ENCODE measurements at regions of chr5 and their contacts with region 1.

Region 1: DNA sequence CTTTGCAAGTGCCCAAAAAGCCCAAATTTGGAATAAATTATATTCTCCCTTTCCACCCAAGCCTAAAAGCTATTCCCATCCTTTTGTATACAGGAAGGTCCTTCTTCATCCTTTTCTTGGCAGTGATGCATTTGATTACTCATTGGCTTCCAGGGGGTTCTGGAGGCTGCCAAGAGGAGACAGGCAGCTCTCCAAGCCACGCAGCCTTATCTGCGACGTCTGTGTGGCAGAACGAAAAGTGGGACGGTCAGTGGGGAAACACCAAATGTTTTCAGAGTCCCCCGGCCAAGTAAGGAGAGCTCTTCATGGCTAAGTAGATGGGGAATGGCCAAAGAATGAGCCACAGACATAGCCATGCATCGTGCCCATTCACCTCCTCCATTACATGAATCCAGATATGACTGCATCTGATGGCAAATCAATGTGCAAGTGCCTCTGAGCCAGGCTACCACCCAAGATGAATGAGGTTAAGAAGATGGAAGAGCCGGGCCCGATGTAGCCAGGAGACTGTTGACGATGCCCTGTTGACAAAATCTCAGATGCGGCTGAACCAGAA is 12.1 kb downstream of the ADAM19 start:
- DNase-seq: no peak
- ATAC-seq: no peak
- H3K4me3 ChIP-seq: no peak overlapping the region
- H3K4me3 Mint-ChIP-seq: peak overlapping the region in 1 of 10 donors; percentile 57
- H3K27ac ChIP-seq: no peak overlapping the region
- H3K27ac Mint-ChIP-seq: peak overlapping the region in 1 of 9 donors; percentile 82
- H3K4me1 ChIP-seq: peaks cover 0 to 8% of the 10 kb centered on the region in 2 donors
- H3K4me1 Mint-ChIP-seq: peaks cover 0 to 82% (median 4%) of the 10 kb centered on the region in 7 donors
- H3K27me3 ChIP-seq: no peaks in the 10 kb centered on the region
- H3K27me3 Mint-ChIP-seq: no peaks in the 10 kb centered on the region

Region 2: DNA sequence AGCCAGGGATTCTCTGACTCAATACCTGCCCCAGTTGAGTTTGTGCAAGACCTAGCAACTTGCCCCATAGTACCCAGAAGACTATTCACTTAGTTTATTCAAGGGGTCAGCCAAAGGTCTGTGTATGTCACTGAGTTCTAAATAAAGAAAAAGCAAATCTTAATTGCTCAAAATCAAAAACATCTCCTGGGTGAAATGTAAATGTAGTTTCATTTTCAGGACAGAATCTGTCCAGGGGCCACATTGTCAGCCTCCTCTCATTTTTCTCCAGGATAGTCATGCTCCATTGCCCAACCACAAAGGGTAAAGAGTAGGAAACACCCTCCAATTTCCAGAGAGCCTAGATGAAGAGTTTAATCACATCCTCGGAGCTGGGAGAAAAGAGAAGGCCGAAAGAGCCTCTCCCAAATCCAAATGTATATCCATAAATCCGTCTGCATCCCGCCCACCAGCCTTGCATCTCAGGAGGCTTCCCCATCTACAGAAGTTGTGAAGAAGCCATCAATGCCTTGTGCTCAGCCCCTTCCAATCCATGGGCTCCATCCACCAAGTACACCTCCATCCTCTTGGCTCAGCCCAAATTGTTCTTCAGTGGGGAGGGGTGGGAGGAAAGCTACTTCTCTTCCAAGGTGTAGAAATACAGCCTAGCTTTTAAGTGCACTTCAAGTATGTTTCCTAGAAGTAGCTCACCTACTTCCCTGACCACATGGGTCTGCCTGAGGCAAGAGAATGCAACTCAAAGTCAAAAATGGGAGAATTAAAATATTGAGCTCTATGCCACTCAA is 14.7 kb before region 1 on chr5:
- CTCF ChIA-PET with region 1: no interaction called
- POLR2A ChIA-PET with region 1: no interaction called
- intact Hi-C with region 1: loop called in 1 of 2 experiments (anchors 2 kb)
- DNase-seq: no peak
- ATAC-seq: peak; percentile 23
- H3K4me3 ChIP-seq: no peak overlapping the region
- H3K4me3 Mint-ChIP-seq: peak overlapping the region in 1 of 10 donors; percentile 81
- H3K27ac ChIP-seq: no peak overlapping the region
- H3K27ac Mint-ChIP-seq: peak overlapping the region in 1 of 9 donors; percentile 99
- H3K4me1 ChIP-seq: peaks cover 0 to 34% of the 10 kb centered on the region in 2 donors
- H3K4me1 Mint-ChIP-seq: peaks cover 0 to 89% (median 15%) of the 10 kb centered on the region in 7 donors
- H3K27me3 ChIP-seq: no peaks in the 10 kb centered on the region
- H3K27me3 Mint-ChIP-seq: no peaks in the 10 kb centered on the region